HepG2 (cell line): ENCODE measurements at regions of chr21 and their contacts with region 1.

Region 1: DNA sequence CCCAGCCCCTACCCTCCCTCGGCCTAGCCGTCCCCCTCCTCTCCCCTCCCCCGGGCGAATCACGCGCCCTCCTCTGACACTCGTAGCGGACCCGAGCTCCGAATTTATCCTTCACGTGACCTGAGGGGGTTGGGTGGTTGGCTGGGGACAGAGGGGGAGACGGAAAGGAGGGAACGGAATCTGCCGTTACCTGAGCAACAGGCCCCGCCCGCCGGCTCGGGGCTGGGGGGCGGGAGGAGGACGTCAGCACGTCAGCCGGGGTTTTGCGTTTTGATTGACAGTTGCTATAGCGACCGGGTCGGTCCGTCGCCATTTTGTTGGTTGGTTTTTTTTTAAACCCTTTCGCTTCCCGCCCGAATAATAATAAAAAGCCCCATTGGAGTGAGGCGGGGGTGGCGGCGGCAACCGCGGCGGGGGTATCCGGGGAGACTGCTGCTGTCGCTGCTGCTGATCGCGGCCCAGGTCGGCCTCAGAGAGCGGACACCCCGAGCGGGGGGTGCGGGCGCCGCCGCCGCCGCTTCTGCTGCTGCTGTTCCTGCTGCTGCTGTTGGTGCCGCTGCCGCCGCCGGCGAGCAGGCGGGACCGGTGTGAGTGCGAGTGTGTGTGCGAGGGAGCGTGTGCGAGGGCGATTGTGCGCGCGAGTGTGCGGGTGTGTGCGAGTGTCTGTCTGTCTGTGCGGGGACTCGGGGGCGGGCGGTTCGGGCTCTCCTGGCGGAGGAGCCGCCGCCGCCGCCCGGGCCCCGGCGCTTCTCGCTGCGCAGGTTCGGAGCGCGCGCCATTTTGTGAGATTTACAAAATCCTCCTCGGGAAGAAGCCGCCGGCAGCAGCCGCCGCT is at the start of gene DYRK1A:
- DNase-seq: peak; percentile 99
- ATAC-seq: peak; percentile 82
- H3K4me3 ChIP-seq: peak within 1 kb of the TSS; percentile 92 to 99 (median 97)
- H3K27ac ChIP-seq: peak within 1 kb of the TSS; percentile 99
- H3K4me1 ChIP-seq: peaks cover 34% of the 10 kb centered on the region
- H3K27me3 ChIP-seq: no peaks in the 10 kb centered on the region; a peak in 1 of 5 replicates
- CTCF ChIP-seq: no peak
- EP300 ChIP-seq: peak; percentile 16 to 34; a peak in 2 of 4 replicates
- POLR2A ChIP-seq: peak in 1 of 2 experiments; percentile 64; a peak in 2 of 4 replicates
- RAD21 ChIP-seq: no peak
- total RNA-seq, gene DYRK1A: 32.7 and 34.2 TPM in 2 replicates

Region 2: GRCh38 chr21:36945496-36946138 is 421.1 kb before region 1 on chr21:
- CTCF ChIA-PET with region 1: no interaction called
- POLR2A ChIA-PET with region 1: no interaction called
- in situ Hi-C with region 1: no loop called
- intact Hi-C with region 1: no loop called
- DNase-seq: no peak
- ATAC-seq: no peak
- H3K4me3 ChIP-seq: no peak overlapping the region
- H3K27ac ChIP-seq: no peak overlapping the region
- H3K4me1 ChIP-seq: no peaks in the 10 kb centered on the region
- H3K27me3 ChIP-seq: no peaks in the 10 kb centered on the region
- CTCF ChIP-seq: no peak
- EP300 ChIP-seq: no peak
- POLR2A ChIP-seq: no peak
- RAD21 ChIP-seq: no peak

Region 3: GRCh38 chr21:37153196-37153934 is 213.3 kb before region 1 on chr21:
- CTCF ChIA-PET with region 1: no interaction called
- POLR2A ChIA-PET with region 1: no interaction called
- in situ Hi-C with region 1: no loop called
- intact Hi-C with region 1: loop called (anchors 5 kb)
- DNase-seq: peak; percentile 36
- ATAC-seq: peak; percentile 31; the same call in 2 of the 3 replicates
- H3K4me3 ChIP-seq: no peak overlapping the region
- H3K27ac ChIP-seq: peak overlapping the region; percentile 83
- H3K4me1 ChIP-seq: peaks cover 22% of the 10 kb centered on the region
- H3K27me3 ChIP-seq: no peaks in the 10 kb centered on the region
- CTCF ChIP-seq: no peak
- EP300 ChIP-seq: no peak
- POLR2A ChIP-seq: no peak
- RAD21 ChIP-seq: no peak